Dendritic cell treated with granulocyte-macrophage colony-stimulating factor and Interleukin-4, amounts not matched to agents 40 ng/mL and 50 ng/mL, for 4 days (primary cell): ENCODE measurements at regions of chr2 and their contacts with region 1.

Region 1: GRCh38 chr2:234425619-234426603 is 71.0 kb downstream of the ARL4C start:
- H3K4me3 Mint-ChIP-seq: no peak overlapping the region
- H3K27ac Mint-ChIP-seq: peak overlapping the region; percentile 98
- H3K4me1 Mint-ChIP-seq: peaks cover 60% of the 10 kb centered on the region
- H3K27me3 Mint-ChIP-seq: no peaks in the 10 kb centered on the region

Region 2: GRCh38 chr2:234146087-234146826 is 279.7 kb before region 1 on chr2:
- intact Hi-C with region 1: no loop called
- H3K4me3 Mint-ChIP-seq: no peak overlapping the region
- H3K27ac Mint-ChIP-seq: no peak overlapping the region
- H3K4me1 Mint-ChIP-seq: peaks cover 4% of the 10 kb centered on the region
- H3K27me3 Mint-ChIP-seq: peaks cover 5% of the 10 kb centered on the region

Region 3: DNA sequence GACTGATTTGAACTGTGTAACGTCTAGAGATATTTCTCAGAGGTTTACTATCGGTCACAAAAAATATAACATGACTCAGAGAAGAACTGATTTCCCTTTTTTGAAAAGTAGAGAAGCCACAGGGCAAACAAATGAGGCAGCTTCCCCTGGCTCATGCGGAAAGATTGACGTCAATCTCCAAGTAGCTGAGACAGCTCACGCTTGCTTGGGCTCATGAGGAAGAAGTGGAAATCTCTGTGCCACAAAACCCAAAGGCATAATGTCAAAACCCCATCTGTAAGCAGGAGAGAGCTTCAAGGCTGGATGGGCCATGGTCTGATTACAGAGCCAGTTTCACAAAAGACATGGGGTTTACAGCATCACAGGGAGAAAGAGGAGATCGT is 117.1 kb before region 1 on chr2:
- intact Hi-C with region 1: loop called (anchors 5 kb)
- H3K4me3 Mint-ChIP-seq: peak overlapping the region; percentile 45
- H3K27ac Mint-ChIP-seq: peak overlapping the region; percentile 98
- H3K4me1 Mint-ChIP-seq: peaks cover 60% of the 10 kb centered on the region
- H3K27me3 Mint-ChIP-seq: no peaks in the 10 kb centered on the region

Region 4: GRCh38 chr2:234446404-234447076 is 20.6 kb after region 1 on chr2:
- intact Hi-C with region 1: loop called (anchors 1 kb)
- H3K4me3 Mint-ChIP-seq: peak overlapping the region; percentile 51
- H3K27ac Mint-ChIP-seq: peak overlapping the region; percentile 99
- H3K4me1 Mint-ChIP-seq: peaks cover 60% of the 10 kb centered on the region
- H3K27me3 Mint-ChIP-seq: no peaks in the 10 kb centered on the region

Region 5: DNA sequence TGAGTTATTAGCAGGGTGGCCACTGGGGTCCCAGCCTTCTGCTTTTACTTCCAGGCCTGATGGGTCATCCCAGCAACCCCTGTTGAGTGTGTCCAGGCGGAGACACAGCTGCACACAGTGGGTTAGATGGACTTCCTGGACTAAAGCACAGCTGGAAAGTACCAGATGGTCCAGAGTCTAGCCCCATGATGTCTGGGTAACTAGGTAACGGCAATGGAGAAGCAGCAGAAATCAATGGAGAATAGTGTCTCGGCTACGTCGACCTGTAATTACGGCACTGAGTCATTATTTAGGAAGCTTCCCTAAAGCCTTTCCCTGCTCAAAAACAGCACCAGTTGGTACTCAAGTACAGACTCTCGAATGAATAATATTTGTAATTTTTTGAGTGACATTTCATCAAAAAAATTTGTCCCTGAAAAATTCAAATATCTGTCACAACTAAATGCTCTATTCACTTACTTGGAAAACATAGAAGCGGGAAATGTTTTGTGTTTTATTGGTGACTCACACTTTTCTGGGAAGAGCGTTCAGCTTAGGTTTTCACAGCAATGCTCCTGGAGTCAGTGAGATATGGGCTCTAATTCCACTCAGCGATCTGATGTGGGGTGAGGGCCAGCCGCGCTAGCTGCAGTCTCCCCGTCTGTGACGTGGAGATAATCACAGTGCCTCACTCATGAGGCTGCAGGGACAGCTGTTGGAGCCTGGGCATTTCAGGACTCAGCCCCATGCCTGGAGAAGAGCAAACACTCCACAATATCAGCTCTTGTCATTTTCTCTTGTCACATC is 87.2 kb after region 1 on chr2:
- intact Hi-C with region 1: no loop called
- H3K4me3 Mint-ChIP-seq: no peak overlapping the region
- H3K27ac Mint-ChIP-seq: no peak overlapping the region
- H3K4me1 Mint-ChIP-seq: no peaks in the 10 kb centered on the region
- H3K27me3 Mint-ChIP-seq: peaks cover 6% of the 10 kb centered on the region

Region 6: GRCh38 chr2:234564699-234565098 is 138.8 kb after region 1 on chr2:
- intact Hi-C with region 1: no loop called
- H3K4me3 Mint-ChIP-seq: no peak overlapping the region
- H3K27ac Mint-ChIP-seq: no peak overlapping the region
- H3K4me1 Mint-ChIP-seq: peaks cover 2% of the 10 kb centered on the region
- H3K27me3 Mint-ChIP-seq: peaks cover under 1% of the 10 kb centered on the region